ENCODE measurements at regions of chr9 and their contacts with region 1.

Region 1: DNA sequence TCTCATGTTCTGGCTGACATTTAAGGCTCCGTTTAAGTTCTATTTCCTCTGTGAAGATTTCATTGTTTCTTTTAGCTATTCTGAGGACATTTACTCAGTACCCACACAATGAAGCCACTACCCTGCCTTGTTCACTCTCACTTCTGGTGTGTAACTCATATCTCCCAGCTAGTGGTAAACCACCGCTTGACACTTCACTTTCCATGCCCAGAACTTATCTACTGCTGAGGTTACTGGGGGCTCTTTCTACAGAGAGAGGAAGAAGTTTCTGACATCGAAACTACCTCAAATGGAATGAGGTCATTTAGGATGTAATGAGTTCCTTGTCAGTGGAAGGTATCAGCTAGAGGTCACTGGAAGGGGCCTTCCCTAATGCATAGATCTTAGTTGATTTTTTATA is 501.5 kb downstream of the DMAC1 start:
- DNase-seq: peak; percentile 92
- ATAC-seq: peak; percentile 93
- H3K4me3 ChIP-seq: peak overlapping the region; percentile 34; the same call in 1 of the 2 replicates
- H3K27ac ChIP-seq: peak overlapping the region; percentile 49
- H3K4me1 ChIP-seq: peaks cover 10% of the 10 kb centered on the region
- H3K27me3 ChIP-seq: no peaks in the 10 kb centered on the region
- CTCF ChIP-seq: no peak
- EP300 ChIP-seq: peak; percentile 91 to 96
- POLR2A ChIP-seq: no peak
- RAD21 ChIP-seq: peak; percentile 32; the same call in 1 of the 2 replicates

Region 2: GRCh38 chr9:6833518-6834192 is 464.5 kb before region 1 on chr9:
- CTCF ChIA-PET with region 1: no interaction called
- POLR2A ChIA-PET with region 1: no interaction called
- RAD21 ChIA-PET with region 1: no interaction called
- SMC1A ChIA-PET with region 1: no interaction called
- in situ Hi-C with region 1: no loop called
- intact Hi-C with region 1: no loop called
- DNase-seq: no peak
- ATAC-seq: no peak
- H3K4me3 ChIP-seq: no peak overlapping the region
- H3K27ac ChIP-seq: no peak overlapping the region
- H3K4me1 ChIP-seq: no peaks in the 10 kb centered on the region
- H3K27me3 ChIP-seq: no peaks in the 10 kb centered on the region
- CTCF ChIP-seq: no peak
- EP300 ChIP-seq: no peak
- POLR2A ChIP-seq: no peak
- RAD21 ChIP-seq: no peak

Region 3: GRCh38 chr9:6907772-6908381 is 390.2 kb before region 1 on chr9:
- CTCF ChIA-PET with region 1: no interaction called
- POLR2A ChIA-PET with region 1: no interaction called
- RAD21 ChIA-PET with region 1: no interaction called
- SMC1A ChIA-PET with region 1: no interaction called
- in situ Hi-C with region 1: loop called (anchors 10 kb)
- intact Hi-C with region 1: loop called (anchors 10 kb)
- DNase-seq: no peak
- ATAC-seq: 0 out of 3 replicates have a peak, but pooled peaks have one; percentile 17
- H3K4me3 ChIP-seq: no peak overlapping the region
- H3K27ac ChIP-seq: no peak overlapping the region
- H3K4me1 ChIP-seq: no peaks in the 10 kb centered on the region
- H3K27me3 ChIP-seq: no peaks in the 10 kb centered on the region
- CTCF ChIP-seq: peak; percentile 35 to 47 (median 42); a peak in 4 of 6 replicates
- EP300 ChIP-seq: no peak
- POLR2A ChIP-seq: no peak
- RAD21 ChIP-seq: peak; percentile 66

Region 4: GRCh38 chr9:7055201-7055903 is 242.8 kb before region 1 on chr9:
- CTCF ChIA-PET with region 1: interaction called, 3 read pairs
- POLR2A ChIA-PET with region 1: no interaction called
- RAD21 ChIA-PET with region 1: no interaction called
- SMC1A ChIA-PET with region 1: interaction called, 3 read pairs
- in situ Hi-C with region 1: no loop called
- intact Hi-C with region 1: loop called (anchors 10 kb)
- DNase-seq: peak; percentile 17
- ATAC-seq: peak; percentile 72
- H3K4me3 ChIP-seq: no peak overlapping the region
- H3K27ac ChIP-seq: no peak overlapping the region
- H3K4me1 ChIP-seq: peaks cover 11% of the 10 kb centered on the region
- H3K27me3 ChIP-seq: no peaks in the 10 kb centered on the region
- CTCF ChIP-seq: no peak
- EP300 ChIP-seq: no peak
- POLR2A ChIP-seq: no peak
- RAD21 ChIP-seq: no peak

Region 5: DNA sequence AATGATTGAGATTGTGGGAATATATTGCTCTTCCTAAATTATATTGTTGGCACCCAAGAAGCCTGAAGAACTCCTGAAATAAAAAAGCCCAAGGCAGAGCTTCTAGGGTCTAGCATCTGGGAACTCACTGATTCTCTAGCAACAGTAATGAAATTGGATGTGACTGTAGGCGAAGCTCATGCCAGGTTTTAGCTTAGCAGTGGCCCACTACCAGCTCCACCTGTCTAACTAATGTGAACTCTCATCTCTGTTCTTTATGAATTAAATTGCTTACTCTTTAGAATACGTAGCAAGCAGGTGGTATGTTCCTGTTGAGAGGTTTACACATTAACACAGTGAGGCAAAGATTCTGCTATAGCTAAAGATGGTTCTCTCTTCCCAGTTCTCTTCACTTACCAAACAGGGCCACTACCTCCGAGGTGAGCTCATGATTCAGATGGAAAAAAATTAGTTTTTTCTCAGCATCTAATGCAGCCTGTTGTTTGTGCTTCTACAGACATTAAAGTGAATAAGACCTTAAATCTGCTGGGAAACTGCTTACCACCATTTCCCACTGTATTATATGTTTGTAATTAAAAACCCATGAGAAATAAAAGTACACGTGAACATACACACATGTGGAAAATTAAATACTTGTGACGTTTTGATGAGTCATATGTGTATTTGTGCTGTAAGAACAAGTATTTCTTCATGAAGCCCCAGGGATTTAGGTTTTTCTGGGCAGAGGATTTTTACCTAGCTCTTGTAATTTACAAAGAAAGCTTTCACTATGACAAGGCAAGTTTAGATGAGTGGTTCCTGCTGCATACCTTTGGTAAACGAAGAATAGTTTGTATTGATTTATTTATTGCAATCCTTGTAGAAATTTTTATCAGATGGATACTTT is 180.2 kb before region 1 on chr9:
- CTCF ChIA-PET with region 1: no interaction called
- POLR2A ChIA-PET with region 1: no interaction called
- RAD21 ChIA-PET with region 1: interaction called, 3 read pairs
- SMC1A ChIA-PET with region 1: interaction called, 7 read pairs
- in situ Hi-C with region 1: no loop called
- intact Hi-C with region 1: loop called (anchors 1 kb)
- DNase-seq: peak; percentile 46
- ATAC-seq: peak; percentile 78
- H3K4me3 ChIP-seq: no peak overlapping the region
- H3K27ac ChIP-seq: peak overlapping the region; percentile 13; the same call in 1 of the 2 replicates
- H3K4me1 ChIP-seq: peaks cover 9% of the 10 kb centered on the region
- H3K27me3 ChIP-seq: no peaks in the 10 kb centered on the region
- CTCF ChIP-seq: no peak
- EP300 ChIP-seq: peak in 1 of 2 experiments; percentile 75; a peak in 2 of 4 replicates
- POLR2A ChIP-seq: no peak
- RAD21 ChIP-seq: no peak

Region 6: GRCh38 chr9:7342229-7342628 is 44.1 kb after region 1 on chr9:
- CTCF ChIA-PET with region 1: no interaction called
- POLR2A ChIA-PET with region 1: interaction called, 3 read pairs
- RAD21 ChIA-PET with region 1: no interaction called
- SMC1A ChIA-PET with region 1: interaction called, 17 read pairs
- in situ Hi-C with region 1: no loop called
- intact Hi-C with region 1: loop called (anchors 1 kb)
- DNase-seq: no peak
- ATAC-seq: peak; percentile 88
- H3K4me3 ChIP-seq: no peak overlapping the region
- H3K27ac ChIP-seq: no peak overlapping the region
- H3K4me1 ChIP-seq: peaks cover 9% of the 10 kb centered on the region; the same call in 1 of the 2 replicates
- H3K27me3 ChIP-seq: no peaks in the 10 kb centered on the region
- CTCF ChIP-seq: 0 out of 6 replicates have a peak, but pooled peaks of 1 of the 3 experiments have one; percentile 8
- EP300 ChIP-seq: no peak
- POLR2A ChIP-seq: no peak
- RAD21 ChIP-seq: no peak; the same call in 1 of the 2 replicates

Region 7: DNA sequence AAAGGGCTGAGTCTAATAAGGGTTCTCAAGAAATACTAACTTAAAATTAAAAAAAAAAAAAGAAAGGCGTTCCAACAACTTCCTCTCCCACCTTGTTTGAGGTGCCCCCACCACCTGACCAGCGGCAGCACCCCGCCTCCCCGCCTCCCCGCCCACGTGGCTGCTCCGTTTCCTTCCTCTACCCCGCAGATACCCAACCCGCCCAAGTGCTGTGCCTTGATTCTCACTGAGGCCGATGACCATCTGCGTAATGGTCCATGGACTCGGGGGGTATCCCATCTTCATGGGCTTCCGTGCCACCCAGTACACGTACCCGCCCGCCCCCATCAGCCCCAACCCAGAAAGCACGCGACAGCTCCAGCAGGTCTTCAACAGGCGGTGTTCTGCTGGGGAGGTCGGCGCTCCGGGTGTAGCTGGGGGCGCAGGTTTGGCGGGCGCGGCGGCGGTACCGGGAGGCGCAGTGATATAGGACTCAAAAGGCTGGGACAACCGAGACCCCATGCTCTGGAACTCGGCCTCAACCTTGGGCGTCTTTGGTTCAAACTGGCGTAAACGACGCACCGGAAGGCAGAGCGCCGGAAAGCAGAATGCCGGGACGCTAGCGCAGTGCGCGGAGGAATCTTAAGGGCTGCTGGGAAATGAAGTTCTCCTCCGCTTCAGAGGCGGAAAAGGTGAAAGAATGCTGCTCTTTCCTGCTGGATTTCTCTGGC is 501.3 kb after region 1 on chr9 and contains the start of gene DMAC1:
- CTCF ChIA-PET with region 1: interaction called, 3 read pairs
- POLR2A ChIA-PET with region 1: no interaction called
- RAD21 ChIA-PET with region 1: no interaction called
- SMC1A ChIA-PET with region 1: no interaction called
- in situ Hi-C with region 1: loop called (anchors 25 kb)
- intact Hi-C with region 1: no loop called
- DNase-seq: peak; percentile 41
- ATAC-seq: peak; percentile 97
- H3K4me3 ChIP-seq: peak within 1 kb of the TSS; percentile 78
- H3K27ac ChIP-seq: peak within 1 kb of the TSS; percentile 87
- H3K4me1 ChIP-seq: no peaks in the 10 kb centered on the region
- H3K27me3 ChIP-seq: no peaks in the 10 kb centered on the region
- CTCF ChIP-seq: no peak
- EP300 ChIP-seq: no peak
- POLR2A ChIP-seq: peak; percentile 88
- RAD21 ChIP-seq: no peak
- polyA plus RNA-seq, gene DMAC1: 25.5 to 55.4 TPM

Region 8: DNA sequence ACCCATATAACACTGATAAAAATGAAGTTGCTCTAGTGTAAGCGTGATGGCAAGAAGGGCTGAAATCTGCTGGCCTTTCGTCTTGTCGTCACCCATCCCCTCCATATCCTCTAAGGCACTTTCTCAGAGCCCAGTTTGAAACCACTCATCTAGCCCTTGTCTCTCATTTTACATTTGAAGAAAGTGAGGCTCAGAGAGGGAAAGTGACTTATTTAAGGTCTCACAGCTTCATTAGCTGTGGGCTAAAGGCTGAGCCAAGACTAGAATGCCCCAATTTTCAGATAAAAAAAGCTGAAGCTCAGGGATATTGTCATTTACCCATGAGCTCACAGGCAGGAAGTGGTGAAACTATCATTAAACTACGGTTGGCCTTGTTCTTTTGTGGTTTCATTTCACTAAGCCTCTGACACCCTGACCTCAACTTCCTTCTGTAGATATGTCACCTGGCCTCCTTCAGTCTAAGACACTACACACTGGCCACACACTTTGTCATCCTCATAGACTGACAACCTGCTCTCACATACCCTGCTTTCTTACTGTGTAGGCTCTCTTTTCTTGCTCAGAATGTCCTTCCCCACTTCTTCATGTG is 678.1 kb after region 1 on chr9:
- CTCF ChIA-PET with region 1: no interaction called
- POLR2A ChIA-PET with region 1: no interaction called
- RAD21 ChIA-PET with region 1: no interaction called
- SMC1A ChIA-PET with region 1: no interaction called
- in situ Hi-C with region 1: loop called (anchors 10 kb)
- intact Hi-C with region 1: loop called (anchors 10 kb)
- DNase-seq: peak; percentile 89
- ATAC-seq: peak; percentile 98
- H3K4me3 ChIP-seq: no peak overlapping the region
- H3K27ac ChIP-seq: peak overlapping the region; percentile 74
- H3K4me1 ChIP-seq: peaks cover 38% of the 10 kb centered on the region
- H3K27me3 ChIP-seq: no peaks in the 10 kb centered on the region
- CTCF ChIP-seq: no peak
- EP300 ChIP-seq: peak; percentile 93 to 96; a peak in 3 of 4 replicates
- POLR2A ChIP-seq: 0 out of 2 replicates have a peak, but pooled peaks have one; percentile 35
- RAD21 ChIP-seq: no peak

Measured in GM12878 (cell line).